Cardiac septum (tissue), 1 donor: ENCODE measurements at regions of chr17 and their contacts with region 1.

Region 1: DNA sequence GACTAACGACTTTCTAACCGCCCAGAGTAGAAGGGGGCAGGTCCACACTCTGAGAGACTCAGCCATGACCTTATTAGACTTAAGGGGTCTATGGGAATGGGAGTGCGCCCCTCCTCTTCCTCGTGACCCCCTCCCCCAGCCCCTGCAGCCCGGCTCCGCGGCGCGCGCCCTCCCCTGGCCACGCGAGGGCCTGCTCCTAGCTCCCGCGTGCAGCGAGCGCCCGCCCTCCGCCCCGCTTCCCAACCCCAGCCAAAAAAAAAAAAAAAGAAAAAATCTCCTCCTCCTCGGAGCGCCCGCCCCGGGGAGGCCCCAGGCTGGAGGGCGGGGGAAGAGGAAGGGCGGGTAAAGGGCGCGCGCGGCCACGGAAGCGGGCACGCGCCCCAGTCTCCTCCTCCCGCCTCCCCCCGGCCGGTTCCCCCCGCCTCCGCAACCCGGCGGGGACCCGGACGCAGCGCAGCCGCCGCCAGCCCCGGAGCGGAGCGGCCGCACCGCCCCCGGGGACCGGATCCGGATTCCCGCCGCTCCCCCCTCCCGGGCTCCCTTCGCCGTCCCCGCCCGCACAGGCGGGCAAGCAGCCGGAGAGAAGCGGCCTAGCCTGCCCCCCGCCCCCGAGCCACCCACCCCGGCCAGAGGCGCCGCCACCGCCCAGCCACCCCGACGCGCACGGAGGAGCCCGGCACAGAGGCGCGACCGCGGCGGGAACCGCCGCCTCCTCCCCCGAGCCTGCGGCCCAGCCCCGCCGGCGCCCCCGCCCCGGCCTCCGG is 949 bp downstream of the UBTF start:
- DNase-seq: peak; percentile 94

Region 2: GRCh38 chr17:44199553-44200477 is 18.7 kb before region 1 on chr17 and contains the start of gene ATXN7L3:
- intact Hi-C with region 1: loop called (anchors 1 kb)
- DNase-seq: peak; percentile 99
- total RNA-seq, gene ATXN7L3: 37.8 TPM

Region 3: DNA sequence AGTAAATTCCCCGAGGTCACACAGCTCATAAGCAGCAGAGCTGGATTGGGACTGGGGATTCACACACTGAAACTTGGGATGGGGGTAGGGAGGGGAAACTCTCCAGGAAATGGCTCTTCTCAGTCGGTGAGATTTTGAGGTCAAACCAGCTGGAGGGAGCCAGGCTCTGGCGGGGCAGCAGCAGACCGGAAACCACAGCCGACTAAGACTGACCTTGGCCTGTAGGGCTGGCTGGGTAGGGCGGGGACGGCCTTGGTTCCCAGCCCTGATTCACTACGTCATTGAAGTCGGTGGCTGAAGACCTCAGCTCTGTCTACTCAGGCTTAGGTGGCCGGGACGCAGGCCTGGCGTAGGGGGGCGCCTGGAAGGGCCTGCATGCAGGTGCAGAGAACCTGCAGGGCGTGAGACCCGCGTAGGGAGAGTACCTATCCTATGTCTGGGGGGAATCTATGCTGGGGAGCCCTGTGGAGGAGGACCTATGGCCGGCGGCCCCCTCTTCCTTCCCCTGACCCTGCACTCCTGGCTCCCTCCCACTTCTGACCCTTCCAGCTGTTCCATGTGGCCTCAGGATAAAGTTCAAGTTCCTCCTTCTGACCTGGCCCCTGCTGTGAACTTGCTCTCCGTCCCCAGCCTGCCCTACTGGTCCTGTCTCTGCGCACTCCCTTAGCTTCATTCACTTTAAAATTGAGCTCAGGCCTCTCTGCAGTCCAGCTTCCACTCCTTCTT is 61.3 kb after region 1 on chr17:
- intact Hi-C with region 1: loop called (anchors 2 kb)
- DNase-seq: peak; percentile 89

Region 4: DNA sequence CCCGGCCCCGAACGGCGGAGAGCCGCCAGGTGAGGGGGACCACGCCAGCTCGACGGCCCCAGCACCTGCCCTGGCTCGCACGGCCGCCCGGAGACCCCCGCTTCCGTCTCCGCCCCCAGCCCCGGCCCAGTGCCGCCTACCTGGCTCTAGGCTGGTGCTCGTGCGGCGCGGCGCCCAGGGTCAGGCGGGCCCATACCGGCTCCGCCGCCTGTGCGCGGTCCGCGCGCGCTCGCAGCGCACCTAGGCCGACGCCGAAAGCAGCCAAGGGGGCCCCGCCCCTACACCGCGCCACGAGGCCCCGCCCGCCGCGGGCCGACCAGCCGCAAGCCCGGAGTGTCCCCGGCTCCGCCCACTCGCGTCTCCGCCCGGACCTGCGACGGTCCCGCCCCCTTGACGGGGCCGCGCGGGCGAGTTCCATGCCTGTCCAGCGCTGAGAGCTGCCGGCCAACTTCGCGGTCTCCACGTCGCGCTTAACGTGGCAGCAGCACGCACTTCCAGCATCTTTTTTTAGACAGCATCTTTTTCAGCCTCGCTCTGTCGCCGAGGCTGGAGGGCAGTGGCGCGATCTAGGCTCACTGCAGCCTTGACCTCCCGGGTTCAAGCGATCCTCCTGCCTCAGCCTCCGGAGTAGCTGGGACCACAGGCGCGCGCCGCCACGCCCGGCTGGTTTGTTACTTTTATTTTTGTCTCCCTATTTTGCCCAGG is 106.2 kb after region 1 on chr17 and contains the start of gene SLC25A39:
- intact Hi-C with region 1: loop called (anchors 1 kb)
- DNase-seq: peak; percentile 99
- total RNA-seq, gene SLC25A39: 53.4 TPM

Region 5: GRCh38 chr17:44503147-44504029 is 284.9 kb after region 1 on chr17 and contains the start of gene GPATCH8:
- intact Hi-C with region 1: loop called (anchors 10 kb)
- DNase-seq: peak; percentile 94
- total RNA-seq, gene GPATCH8: 23.8 TPM